ENCODE measurements at regions of chr19 and their contacts with region 1.

Region 1: GRCh38 chr19:18281082-18282020 is at the start of gene JUND:
- DNase-seq: peak; percentile 94 to 99 (median 99)
- ATAC-seq: peak; percentile 63 to 68
- H3K4me3 Mint-ChIP-seq: peak within 1 kb of the TSS; percentile 91 to 97 (median 96)
- H3K27ac Mint-ChIP-seq: peak within 1 kb of the TSS; percentile 96 to 100 (median 98)
- H3K4me1 Mint-ChIP-seq: peaks cover 31 to 62% (median 52%) of the 10 kb centered on the region in 4 donors
- H3K27me3 Mint-ChIP-seq: peaks cover 0 to 6% (median 0%) of the 10 kb centered on the region in 5 donors
- polyA plus RNA-seq, gene JUND: 43.3 to 169 (median 69.1) TPM

Region 2: DNA sequence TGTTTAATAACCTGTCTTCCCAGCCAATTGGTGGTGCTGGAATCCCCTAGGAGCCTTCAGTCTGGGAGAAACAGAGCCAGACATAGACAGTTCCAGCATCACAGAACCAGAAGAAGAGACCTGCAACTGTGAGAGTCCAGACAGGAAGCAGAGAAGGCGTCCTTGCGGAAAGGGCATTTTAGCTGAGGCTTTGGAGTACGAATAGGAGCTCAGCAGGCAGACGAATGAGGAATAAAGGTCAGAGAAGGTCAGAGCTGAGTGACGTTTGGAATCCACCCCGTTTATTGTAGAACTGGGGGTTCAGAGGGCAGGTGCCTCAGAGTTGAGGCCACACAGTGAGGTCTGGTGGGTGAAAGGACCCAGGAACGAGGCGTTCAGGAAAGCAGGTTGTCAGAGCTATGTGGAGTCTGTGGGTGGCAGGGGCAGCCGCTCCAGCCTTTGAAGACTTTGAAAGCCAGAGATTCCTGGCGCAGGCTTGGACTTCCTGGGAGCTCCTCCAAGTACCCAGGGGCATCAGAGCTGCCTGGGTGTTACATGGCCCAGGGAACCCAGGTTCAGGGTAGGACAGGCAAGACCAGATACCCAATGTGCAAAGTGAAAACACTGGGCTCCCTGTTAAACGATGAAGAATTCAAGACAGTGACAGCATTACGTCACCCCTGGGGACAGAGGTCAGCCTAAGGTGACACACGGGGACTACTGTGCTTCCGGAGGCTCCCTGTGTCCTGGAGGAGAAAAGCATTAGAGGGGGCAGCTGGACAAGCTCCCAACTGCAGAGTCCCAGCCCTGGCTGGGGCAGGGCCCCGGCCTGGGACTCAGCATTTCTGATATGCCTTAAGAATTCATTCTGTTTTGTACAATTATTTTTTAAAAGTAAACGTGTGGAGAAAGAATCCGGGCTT is 267.9 kb before region 1 on chr19:
- POLR2A ChIA-PET with region 1: interaction called, 11 read pairs
- DNase-seq: peak in 1 of 10 donors; percentile 26
- ATAC-seq: peak; percentile 24 to 35
- H3K4me3 Mint-ChIP-seq: peak overlapping the region; percentile 61 to 95 (median 84)
- H3K27ac Mint-ChIP-seq: peak overlapping the region; percentile 95 to 100 (median 98)
- H3K4me1 Mint-ChIP-seq: peaks cover 35 to 75% (median 68%) of the 10 kb centered on the region in 4 donors
- H3K27me3 Mint-ChIP-seq: no peaks in the 10 kb centered on the region

Region 3: GRCh38 chr19:18152444-18152816 is 128.9 kb before region 1 on chr19:
- POLR2A ChIA-PET with region 1: interaction called, 11 read pairs
- DNase-seq: peak; percentile 95 to 100 (median 97)
- ATAC-seq: peak; percentile 70 to 72
- H3K4me3 Mint-ChIP-seq: peak overlapping the region; percentile 83 to 97 (median 93)
- H3K27ac Mint-ChIP-seq: peak overlapping the region; percentile 93 to 99 (median 96)
- H3K4me1 Mint-ChIP-seq: peaks cover 15 to 31% (median 26%) of the 10 kb centered on the region in 4 donors
- H3K27me3 Mint-ChIP-seq: no peaks in the 10 kb centered on the region

Region 4: GRCh38 chr19:18291590-18292461 is 10.5 kb after region 1 on chr19:
- POLR2A ChIA-PET with region 1: interaction called, 229 read pairs
- DNase-seq: peak; percentile 71 to 91 (median 81)
- ATAC-seq: peak; percentile 38 to 50
- H3K4me3 Mint-ChIP-seq: peak overlapping the region; percentile 80 to 96 (median 92)
- H3K27ac Mint-ChIP-seq: peak overlapping the region; percentile 93 to 100 (median 97)
- H3K4me1 Mint-ChIP-seq: peaks cover 31 to 67% (median 60%) of the 10 kb centered on the region in 4 donors
- H3K27me3 Mint-ChIP-seq: peaks cover 0 to 1% (median 0%) of the 10 kb centered on the region in 5 donors

Region 5: DNA sequence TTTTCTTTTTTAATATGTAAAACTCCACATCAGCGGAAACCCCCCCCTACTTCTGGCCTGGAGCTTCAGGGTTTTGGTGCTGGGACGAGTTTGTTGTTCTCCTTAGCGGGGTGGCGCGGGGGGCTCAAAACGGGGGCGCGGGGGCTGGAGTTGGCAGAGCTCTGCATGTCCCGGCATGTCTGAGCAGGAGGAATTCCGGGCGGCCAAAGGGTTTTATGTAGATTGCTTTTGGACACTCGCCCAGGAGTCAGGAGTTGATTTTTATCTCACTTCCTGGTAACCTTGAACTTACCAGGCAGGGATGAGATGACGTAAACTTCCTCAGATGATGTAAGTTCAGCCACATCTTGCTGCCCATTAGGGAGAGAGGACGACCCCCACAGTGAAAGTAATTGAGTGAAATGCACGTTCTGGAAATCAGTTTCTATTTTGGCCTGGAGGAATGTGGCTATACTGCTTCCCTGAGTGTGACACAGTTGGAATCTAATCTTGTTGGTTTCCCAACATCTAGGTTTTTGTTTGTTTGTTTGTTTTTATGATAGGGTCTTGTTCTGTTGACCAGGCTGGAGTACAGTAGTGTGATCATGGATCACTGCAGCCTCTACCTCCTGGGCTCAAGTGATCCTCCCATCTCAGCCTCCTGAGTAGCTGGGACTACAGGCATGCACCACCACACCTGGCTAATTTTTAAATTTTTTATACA is 83.6 kb after region 1 on chr19:
- POLR2A ChIA-PET with region 1: interaction called, 13 read pairs
- DNase-seq: no peak
- ATAC-seq: no peak
- H3K4me3 Mint-ChIP-seq: no peak overlapping the region
- H3K27ac Mint-ChIP-seq: no peak overlapping the region
- H3K4me1 Mint-ChIP-seq: peaks cover 0 to 7% (median 2%) of the 10 kb centered on the region in 4 donors
- H3K27me3 Mint-ChIP-seq: no peaks in the 10 kb centered on the region

Region 6: DNA sequence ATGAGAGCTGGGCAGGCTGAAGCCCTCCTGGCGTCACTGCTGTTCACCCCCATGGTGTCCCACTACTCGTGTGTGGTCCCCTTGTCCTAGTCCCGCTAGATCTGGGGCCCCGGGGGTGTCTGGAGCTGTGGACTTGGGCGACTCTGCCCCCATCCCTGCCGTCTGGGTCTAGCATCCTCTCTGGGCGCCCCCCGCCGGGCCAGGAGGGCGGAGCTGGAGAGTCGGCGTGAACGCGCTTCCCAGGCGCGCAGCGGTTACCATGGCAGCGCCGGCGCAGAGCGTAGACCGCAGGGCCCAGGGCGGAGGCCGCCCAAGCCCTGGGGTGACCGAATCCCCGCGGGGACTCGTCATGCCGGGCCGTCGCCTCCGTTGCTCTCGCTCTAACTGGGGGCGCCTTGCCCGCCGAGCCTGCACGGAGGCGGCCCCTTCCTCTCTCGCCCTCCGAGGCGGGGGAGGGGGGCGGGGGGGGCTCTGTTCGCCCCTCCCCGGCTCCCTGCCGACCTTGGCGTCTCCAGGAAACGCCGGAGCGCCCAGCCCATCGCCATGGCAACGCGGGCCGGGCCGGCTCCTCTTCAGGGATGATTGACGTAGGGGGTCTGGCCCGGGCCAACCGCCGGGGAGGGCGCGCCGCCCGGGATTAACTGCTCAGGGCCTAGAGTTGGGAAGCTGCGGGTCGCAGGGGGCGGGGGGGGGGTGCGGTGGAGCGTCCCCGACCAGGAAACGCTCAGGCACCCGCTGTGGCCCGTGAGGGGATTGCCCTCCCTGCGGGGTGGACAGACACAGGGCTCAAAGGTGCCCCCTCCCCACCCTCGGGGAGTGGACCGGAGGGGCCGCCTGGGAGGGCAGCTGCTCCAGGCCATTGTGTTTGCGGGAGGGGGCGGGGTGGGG is 147.7 kb after region 1 on chr19:
- POLR2A ChIA-PET with region 1: interaction called, 11 read pairs
- DNase-seq: peak; percentile 79 to 95 (median 90)
- ATAC-seq: peak; percentile 75 to 81
- H3K4me3 Mint-ChIP-seq: peak overlapping the region; percentile 33 to 80 (median 65)
- H3K27ac Mint-ChIP-seq: peak overlapping the region in 9 of 10 donors; percentile 59 to 95 (median 92)
- H3K4me1 Mint-ChIP-seq: peaks cover 9 to 43% (median 35%) of the 10 kb centered on the region in 4 donors
- H3K27me3 Mint-ChIP-seq: no peaks in the 10 kb centered on the region

Measured in naive thymus-derived CD8-positive, alpha-beta T cell (primary cell).